H1 (cell line): ENCODE measurements at regions of chr9 and their contacts with region 1.

Region 1: GRCh38 chr9:106143781-106144180 is 449.4 kb downstream of the TMEM38B start:
- DNase-seq: no peak
- H3K4me3 ChIP-seq: no peak overlapping the region
- H3K27ac ChIP-seq: no peak overlapping the region
- H3K4me1 ChIP-seq: no peaks in the 10 kb centered on the region
- H3K27me3 ChIP-seq: no peaks in the 10 kb centered on the region
- CTCF ChIP-seq: peak in 1 of 3 experiments; percentile 21; a peak in 1 of 4 replicates
- EP300 ChIP-seq: no peak
- POLR2A ChIP-seq: no peak
- RAD21 ChIP-seq: no peak

Region 2: DNA sequence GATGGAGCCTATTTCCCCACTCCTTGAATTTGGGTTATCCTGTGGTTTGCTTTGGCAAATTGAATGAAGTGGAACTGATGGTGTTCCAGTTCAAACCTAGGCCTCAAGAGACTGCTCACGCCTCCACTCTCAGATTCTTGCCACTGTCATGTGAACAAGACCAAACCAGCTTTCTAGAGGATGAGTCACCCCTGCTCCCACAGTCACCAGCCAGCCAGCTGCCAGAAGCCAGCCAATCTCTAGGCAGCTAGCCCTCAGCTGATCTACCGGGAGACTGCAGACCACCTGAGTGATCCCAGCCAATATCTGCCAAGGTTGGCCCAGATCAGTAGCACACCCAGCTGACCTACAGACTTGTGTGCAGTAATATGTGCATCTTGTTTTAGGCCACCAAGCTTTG is 148.8 kb before region 1 on chr9:
- CTCF ChIA-PET with region 1: no interaction called
- POLR2A ChIA-PET with region 1: no interaction called
- DNase-seq: no peak
- H3K4me3 ChIP-seq: no peak overlapping the region
- H3K27ac ChIP-seq: no peak overlapping the region
- H3K4me1 ChIP-seq: peaks cover 0 to 10% (median 5%) of the 10 kb centered on the region in 4 experiments; a peak in 3 of 7 replicates
- H3K27me3 ChIP-seq: no peaks in the 10 kb centered on the region
- CTCF ChIP-seq: no peak
- EP300 ChIP-seq: no peak
- POLR2A ChIP-seq: no peak
- RAD21 ChIP-seq: no peak

Region 3: GRCh38 chr9:106156465-106156864 is 12.7 kb after region 1 on chr9:
- CTCF ChIA-PET with region 1: interaction called, 14 read pairs
- POLR2A ChIA-PET with region 1: no interaction called
- DNase-seq: no peak
- H3K4me3 ChIP-seq: no peak overlapping the region
- H3K27ac ChIP-seq: no peak overlapping the region
- H3K4me1 ChIP-seq: no peaks in the 10 kb centered on the region
- H3K27me3 ChIP-seq: no peaks in the 10 kb centered on the region
- CTCF ChIP-seq: no peak
- EP300 ChIP-seq: no peak
- POLR2A ChIP-seq: no peak
- RAD21 ChIP-seq: no peak

Region 4: DNA sequence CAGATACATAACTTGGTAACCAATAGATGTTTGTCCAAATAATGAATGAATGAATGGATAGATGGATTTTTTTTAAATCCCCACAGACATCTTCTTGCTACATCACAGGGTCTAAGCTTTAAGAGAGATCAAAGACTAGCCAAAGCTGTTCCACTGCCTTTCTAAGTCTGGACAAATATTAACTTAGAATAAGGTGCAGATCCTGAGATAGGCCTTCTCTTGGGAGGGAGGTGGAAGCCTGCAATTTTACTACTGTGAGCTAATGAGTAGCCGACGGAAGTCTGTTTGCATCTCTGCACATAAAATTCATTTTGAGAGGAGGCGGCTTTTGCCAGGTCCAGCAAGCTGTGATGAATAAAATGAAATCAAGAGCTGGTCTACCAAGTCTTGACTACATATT is 35.4 kb after region 1 on chr9:
- CTCF ChIA-PET with region 1: no interaction called
- POLR2A ChIA-PET with region 1: no interaction called
- DNase-seq: no peak
- H3K4me3 ChIP-seq: no peak overlapping the region
- H3K27ac ChIP-seq: no peak overlapping the region
- H3K4me1 ChIP-seq: 0 out of 7 replicates have a peak, but pooled peaks cover 0 to 2% (median 0%) of the 10 kb centered on the region in 4 experiments
- H3K27me3 ChIP-seq: no peaks in the 10 kb centered on the region
- CTCF ChIP-seq: no peak
- EP300 ChIP-seq: no peak
- POLR2A ChIP-seq: no peak
- RAD21 ChIP-seq: no peak

Region 5: GRCh38 chr9:106207298-106207697 is 63.5 kb after region 1 on chr9:
- CTCF ChIA-PET with region 1: no interaction called
- POLR2A ChIA-PET with region 1: no interaction called
- DNase-seq: no peak
- H3K4me3 ChIP-seq: no peak overlapping the region
- H3K27ac ChIP-seq: no peak overlapping the region
- H3K4me1 ChIP-seq: no peaks in the 10 kb centered on the region
- H3K27me3 ChIP-seq: no peaks in the 10 kb centered on the region
- CTCF ChIP-seq: no peak
- EP300 ChIP-seq: no peak
- POLR2A ChIP-seq: no peak
- RAD21 ChIP-seq: no peak